Transverse colon (tissue), 4 donors: ENCODE measurements at regions of chr11 and their contacts with region 1.

Region 1: DNA sequence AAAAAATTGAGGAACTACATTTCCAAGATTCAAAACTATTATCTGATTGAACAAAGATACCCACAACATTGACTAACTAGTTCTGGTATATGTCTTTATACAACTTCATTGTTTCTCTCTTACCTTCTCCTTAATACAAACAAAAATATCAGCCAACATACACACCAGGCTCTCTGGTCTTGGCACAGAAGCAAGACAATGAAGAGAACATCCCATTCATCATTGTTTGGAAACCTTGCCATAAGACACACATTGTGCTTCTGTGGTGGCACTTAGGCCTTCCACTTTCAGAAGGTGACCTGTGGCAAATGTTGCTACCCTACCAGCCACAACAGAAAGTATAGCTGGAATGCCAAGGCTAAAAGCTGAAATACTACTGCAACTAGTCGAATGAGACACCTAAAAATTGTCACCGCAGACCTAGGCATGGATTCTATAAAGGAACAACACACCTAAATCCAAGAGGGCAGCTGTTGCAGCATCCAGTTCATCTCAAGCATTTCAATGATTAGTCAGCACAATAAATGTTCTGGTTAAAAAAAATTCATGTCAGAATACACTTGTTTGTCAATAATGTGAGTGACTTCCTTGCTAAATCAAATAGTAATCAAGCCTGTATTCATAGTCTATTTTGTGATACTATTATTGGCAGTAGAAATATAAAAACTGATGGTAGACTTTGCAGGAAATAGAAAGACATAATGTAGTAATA is 26.3 kb downstream of the MAP6 start:
- DNase-seq: no peak
- H3K4me3 ChIP-seq: no peak overlapping the region
- H3K27ac ChIP-seq: no peak overlapping the region
- H3K4me1 ChIP-seq: peaks cover 4 to 13% (median 8%) of the 10 kb centered on the region in 4 donors
- H3K27me3 ChIP-seq: no peaks in the 10 kb centered on the region
- CTCF ChIP-seq: no peak
- EP300 ChIP-seq: no peak
- POLR2A ChIP-seq: no peak

Region 2: GRCh38 chr11:75668451-75669297 is 26.1 kb after region 1 on chr11 and contains the start of gene MAP6:
- in situ Hi-C with region 1: no loop called
- intact Hi-C with region 1: loop called (anchors 1 kb)
- DNase-seq: peak; percentile 25
- H3K4me3 ChIP-seq: peak within 1 kb of the TSS in 3 of 4 donors; percentile 43 to 62 (median 52)
- H3K27ac ChIP-seq: peak within 1 kb of the TSS; percentile 46 to 72 (median 68)
- H3K4me1 ChIP-seq: peaks cover 8 to 20% (median 19%) of the 10 kb centered on the region in 4 donors
- H3K27me3 ChIP-seq: peaks cover 86% of the 10 kb centered on the region
- CTCF ChIP-seq: no peak
- EP300 ChIP-seq: no peak
- POLR2A ChIP-seq: no peak
- total RNA-seq, gene MAP6: 1.9 to 6.4 (median 3.0) TPM